ENCODE measurements at regions of chr16 and their contacts with region 1.

Region 1: DNA sequence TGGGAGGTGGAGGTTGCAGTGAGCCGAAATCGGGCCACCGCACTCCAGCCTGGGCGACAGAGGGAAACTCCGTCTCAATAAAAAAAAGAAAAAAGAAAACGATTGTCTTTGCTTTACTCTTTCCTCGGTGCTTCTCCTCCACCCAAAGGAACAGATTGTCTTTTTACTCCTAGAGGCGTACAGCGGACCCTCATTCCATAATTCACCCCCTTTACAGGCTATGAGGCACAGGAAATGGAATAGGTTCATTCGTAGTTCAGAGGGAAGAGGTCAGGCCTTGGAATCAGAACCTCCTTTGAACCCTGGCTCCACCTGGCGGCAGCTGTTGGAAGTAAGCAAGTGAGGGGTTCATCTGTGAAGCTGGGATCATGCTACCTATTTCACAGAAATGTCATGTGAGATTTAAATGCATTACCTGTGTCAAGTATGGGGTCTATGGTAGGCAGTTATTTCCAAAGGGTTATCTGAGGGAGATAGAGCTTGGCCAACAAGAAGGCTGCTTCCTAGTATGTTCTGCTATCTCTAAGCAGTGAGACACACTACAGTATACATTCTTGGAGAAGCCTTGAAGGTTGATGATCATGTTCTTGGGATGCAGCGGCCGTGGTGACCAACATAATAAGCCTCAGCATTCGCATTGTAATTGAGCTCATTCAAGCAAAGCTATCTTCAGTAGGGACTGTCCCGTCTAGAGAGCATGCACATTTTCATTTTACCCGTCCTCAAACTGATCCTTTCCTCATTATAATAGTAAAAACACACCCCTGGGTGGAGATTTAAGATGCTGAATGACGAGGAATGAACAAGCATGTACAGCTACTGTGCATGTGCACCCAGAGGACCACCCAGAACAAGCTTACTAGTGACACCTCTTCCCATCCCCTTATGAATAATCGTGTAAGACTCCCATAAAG is 18.7 kb upstream of the ZNF689 start:
- DNase-seq: peak; percentile 87
- H3K4me3 Mint-ChIP-seq: no peak overlapping the region
- H3K27ac Mint-ChIP-seq: no peak overlapping the region
- H3K4me1 Mint-ChIP-seq: peaks cover 6% of the 10 kb centered on the region
- H3K27me3 Mint-ChIP-seq: no peaks in the 10 kb centered on the region
- CTCF ChIP-seq: peak; percentile 84

Region 2: DNA sequence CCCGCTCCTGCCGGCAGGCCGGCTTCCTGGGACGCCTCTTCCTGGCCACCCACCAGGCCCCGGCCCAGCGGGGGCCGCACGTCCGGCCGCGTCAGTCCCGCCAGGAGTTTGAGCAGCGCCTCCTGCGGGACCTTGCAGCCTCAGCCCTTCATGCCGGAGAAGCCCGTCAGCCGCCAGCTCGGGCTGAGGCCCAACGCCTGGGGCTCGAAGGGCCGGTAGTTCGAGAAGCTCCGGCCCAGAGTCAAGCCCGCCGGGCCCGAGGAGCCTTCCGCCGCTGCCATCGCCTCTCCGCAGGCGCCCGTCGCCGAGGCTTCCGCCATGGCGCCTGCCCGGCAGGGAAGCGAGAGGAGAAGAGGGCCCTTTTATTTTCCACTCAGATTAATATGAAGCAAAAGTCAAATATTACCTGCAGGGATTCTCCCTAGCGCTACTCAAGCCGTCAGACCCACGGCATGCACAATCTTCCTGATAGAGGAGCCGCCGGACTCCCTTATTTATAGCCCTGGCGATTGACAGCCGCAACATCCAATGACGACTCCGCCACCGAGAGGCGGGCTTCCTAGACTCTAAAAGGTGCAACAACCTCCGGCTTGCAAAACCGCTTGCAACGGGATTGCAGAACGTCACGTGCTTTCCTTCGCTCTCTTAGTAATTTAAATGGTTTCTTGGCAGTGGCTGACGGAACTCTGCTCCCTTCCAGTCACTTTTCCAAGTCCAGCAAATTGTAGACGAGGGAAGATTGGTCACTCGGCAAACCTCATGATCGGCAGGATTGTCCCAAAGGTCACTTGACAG is 183.3 kb before region 1 on chr16 and contains the start of gene SEPHS2:
- CTCF ChIA-PET with region 1: interaction called, 11 read pairs
- POLR2A ChIA-PET with region 1: interaction called, 4 read pairs
- intact Hi-C with region 1: loop called (anchors 1 kb)
- DNase-seq: peak; percentile 99
- H3K4me3 Mint-ChIP-seq: peak within 1 kb of the TSS; percentile 80
- H3K27ac Mint-ChIP-seq: peak within 1 kb of the TSS; percentile 90
- H3K4me1 Mint-ChIP-seq: peaks cover 17% of the 10 kb centered on the region
- H3K27me3 Mint-ChIP-seq: no peaks in the 10 kb centered on the region
- CTCF ChIP-seq: peak; percentile 11
- total RNA-seq, gene SEPHS2: 51.9 and 73.3 TPM in 2 replicates

Region 3: GRCh38 chr16:30571695-30572600 is 56.9 kb before region 1 on chr16 and contains the start of gene ZNF688:
- CTCF ChIA-PET with region 1: interaction called, 15 read pairs
- POLR2A ChIA-PET with region 1: interaction called, 12 read pairs
- intact Hi-C with region 1: no loop called
- DNase-seq: peak; percentile 97
- H3K4me3 Mint-ChIP-seq: peak within 1 kb of the TSS; percentile 75
- H3K27ac Mint-ChIP-seq: peak within 1 kb of the TSS; percentile 76
- H3K4me1 Mint-ChIP-seq: peaks cover 19% of the 10 kb centered on the region
- H3K27me3 Mint-ChIP-seq: no peaks in the 10 kb centered on the region
- CTCF ChIP-seq: no peak
- total RNA-seq, gene ZNF688: 9.0 and 11.6 TPM in 2 replicates

Region 4: GRCh38 chr16:30585400-30586189 is 43.3 kb before region 1 on chr16 and contains the start of gene ZNF785:
- CTCF ChIA-PET with region 1: interaction called, 13 read pairs
- POLR2A ChIA-PET with region 1: interaction called, 13 read pairs
- intact Hi-C with region 1: no loop called
- DNase-seq: peak; percentile 100
- H3K4me3 Mint-ChIP-seq: peak within 1 kb of the TSS; percentile 96
- H3K27ac Mint-ChIP-seq: peak within 1 kb of the TSS; percentile 78
- H3K4me1 Mint-ChIP-seq: no peaks in the 10 kb centered on the region
- H3K27me3 Mint-ChIP-seq: no peaks in the 10 kb centered on the region
- CTCF ChIP-seq: no peak
- total RNA-seq, gene ZNF785: 12.8 and 16.3 TPM in 2 replicates

Region 5: GRCh38 chr16:30602616-30603277 is 26.1 kb before region 1 on chr16:
- CTCF ChIA-PET with region 1: interaction called, 20 read pairs
- POLR2A ChIA-PET with region 1: interaction called, 3 read pairs
- intact Hi-C with region 1: no loop called
- DNase-seq: no peak
- H3K4me3 Mint-ChIP-seq: no peak overlapping the region
- H3K27ac Mint-ChIP-seq: no peak overlapping the region
- H3K4me1 Mint-ChIP-seq: no peaks in the 10 kb centered on the region
- H3K27me3 Mint-ChIP-seq: no peaks in the 10 kb centered on the region
- CTCF ChIP-seq: no peak

Region 6: GRCh38 chr16:30609926-30610839 is 18.7 kb before region 1 on chr16 and contains the start of gene ZNF689:
- CTCF ChIA-PET with region 1: interaction called, 11 read pairs
- POLR2A ChIA-PET with region 1: interaction called, 12 read pairs
- intact Hi-C with region 1: no loop called
- DNase-seq: peak; percentile 98
- H3K4me3 Mint-ChIP-seq: peak within 1 kb of the TSS; percentile 80
- H3K27ac Mint-ChIP-seq: peak within 1 kb of the TSS; percentile 92
- H3K4me1 Mint-ChIP-seq: no peaks in the 10 kb centered on the region
- H3K27me3 Mint-ChIP-seq: no peaks in the 10 kb centered on the region
- CTCF ChIP-seq: no peak
- total RNA-seq, gene ZNF689: 4.5 and 6.1 TPM in 2 replicates

Region 7: GRCh38 chr16:30678586-30678970 is 49.7 kb after region 1 on chr16:
- CTCF ChIA-PET with region 1: no interaction called
- POLR2A ChIA-PET with region 1: no interaction called
- intact Hi-C with region 1: no loop called
- DNase-seq: no peak
- H3K4me3 Mint-ChIP-seq: no peak overlapping the region
- H3K27ac Mint-ChIP-seq: no peak overlapping the region
- H3K4me1 Mint-ChIP-seq: no peaks in the 10 kb centered on the region
- H3K27me3 Mint-ChIP-seq: no peaks in the 10 kb centered on the region
- CTCF ChIP-seq: no peak

Measured in MCF 10A (cell line).